ENCODE measurements at regions of chr7 and their contacts with region 1.

Region 1: DNA sequence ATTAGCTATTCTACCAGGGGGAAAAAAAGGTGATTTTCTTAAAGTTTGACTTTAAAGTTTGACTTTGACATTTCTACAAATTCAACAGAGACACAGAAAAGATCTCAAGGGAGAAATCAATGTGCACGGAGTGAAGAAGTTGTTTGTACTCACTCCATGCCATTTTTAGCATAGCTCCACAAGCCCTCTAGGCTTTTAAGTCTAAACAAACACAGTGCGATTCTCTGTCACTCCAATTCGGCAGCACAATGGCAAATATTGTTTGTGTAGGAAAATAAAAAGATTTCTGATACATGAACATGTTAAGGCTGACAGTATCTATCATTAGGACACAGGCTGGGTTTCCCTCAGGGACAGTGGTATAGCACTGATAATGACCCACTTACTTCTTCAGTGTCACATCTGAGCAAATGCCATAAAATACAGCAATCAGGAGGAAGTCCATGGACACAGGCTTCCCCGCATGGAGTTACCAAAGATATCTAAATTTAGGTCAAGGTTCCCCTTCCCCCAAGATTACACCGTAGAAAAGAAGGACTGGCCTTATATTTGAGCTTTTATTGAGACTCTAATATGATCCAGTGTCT is 28.0 kb downstream of the GSAP start:
- DNase-seq: peak; percentile 64
- ATAC-seq: peak; percentile 89
- H3K4me3 ChIP-seq: no peak overlapping the region
- H3K27ac ChIP-seq: peak overlapping the region; percentile 64
- H3K4me1 ChIP-seq: peaks cover 49% of the 10 kb centered on the region
- H3K27me3 ChIP-seq: no peaks in the 10 kb centered on the region
- CTCF ChIP-seq: no peak
- EP300 ChIP-seq: no peak
- POLR2A ChIP-seq: no peak
- RAD21 ChIP-seq: no peak

Region 2: GRCh38 chr7:77281780-77282478 is 106.2 kb before region 1 on chr7:
- CTCF ChIA-PET with region 1: no interaction called
- POLR2A ChIA-PET with region 1: no interaction called
- in situ Hi-C with region 1: no loop called
- intact Hi-C with region 1: no loop called
- DNase-seq: no peak
- ATAC-seq: no peak
- H3K4me3 ChIP-seq: no peak overlapping the region
- H3K27ac ChIP-seq: no peak overlapping the region
- H3K4me1 ChIP-seq: no peaks in the 10 kb centered on the region
- H3K27me3 ChIP-seq: no peaks in the 10 kb centered on the region
- CTCF ChIP-seq: no peak
- EP300 ChIP-seq: no peak
- POLR2A ChIP-seq: no peak
- RAD21 ChIP-seq: no peak

Region 3: GRCh38 chr7:77415823-77416622 is 27.9 kb after region 1 on chr7 and contains the start of gene GSAP:
- CTCF ChIA-PET with region 1: no interaction called
- POLR2A ChIA-PET with region 1: interaction called, 10 read pairs
- in situ Hi-C with region 1: no loop called
- intact Hi-C with region 1: no loop called
- DNase-seq: no peak
- ATAC-seq: peak; percentile 88
- H3K4me3 ChIP-seq: peak within 1 kb of the TSS; percentile 68 to 86 (median 81)
- H3K27ac ChIP-seq: peak within 1 kb of the TSS; percentile 94
- H3K4me1 ChIP-seq: peaks cover 71% of the 10 kb centered on the region
- H3K27me3 ChIP-seq: no peaks in the 10 kb centered on the region
- CTCF ChIP-seq: no peak
- EP300 ChIP-seq: 0 out of 4 replicates have a peak, but pooled peaks of 1 of the 2 experiments have one; percentile 5
- POLR2A ChIP-seq: peak; percentile 78 to 82
- RAD21 ChIP-seq: no peak; the same call in 1 of the 2 replicates
- total RNA-seq, gene GSAP: 15.6 and 34.6 TPM in 2 replicates

Region 4: DNA sequence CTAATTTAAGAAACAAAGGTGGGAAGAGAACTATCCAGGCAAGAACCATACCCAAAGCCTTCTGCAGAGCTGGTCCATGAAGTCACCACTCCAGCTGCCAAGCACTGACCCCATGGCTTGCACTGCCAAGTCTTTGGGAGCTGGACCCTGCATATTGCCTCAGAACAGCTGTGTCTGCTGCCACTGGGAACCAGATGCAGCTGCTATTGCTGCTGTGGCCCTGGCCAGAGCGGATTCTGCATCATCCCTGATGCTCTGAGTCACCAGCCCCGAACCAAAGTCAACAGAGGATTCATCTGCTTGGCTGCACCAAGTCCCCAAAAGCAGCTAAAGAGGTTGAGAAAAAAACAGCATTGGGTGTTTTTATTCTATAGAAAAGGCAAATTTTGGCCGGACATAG is 67.2 kb after region 1 on chr7:
- CTCF ChIA-PET with region 1: no interaction called
- POLR2A ChIA-PET with region 1: no interaction called
- in situ Hi-C with region 1: no loop called
- intact Hi-C with region 1: no loop called
- DNase-seq: peak; percentile 60
- ATAC-seq: peak; percentile 55
- H3K4me3 ChIP-seq: no peak overlapping the region
- H3K27ac ChIP-seq: no peak overlapping the region
- H3K4me1 ChIP-seq: peaks cover 71% of the 10 kb centered on the region
- H3K27me3 ChIP-seq: no peaks in the 10 kb centered on the region
- CTCF ChIP-seq: no peak
- EP300 ChIP-seq: no peak
- POLR2A ChIP-seq: no peak
- RAD21 ChIP-seq: no peak

Region 5: DNA sequence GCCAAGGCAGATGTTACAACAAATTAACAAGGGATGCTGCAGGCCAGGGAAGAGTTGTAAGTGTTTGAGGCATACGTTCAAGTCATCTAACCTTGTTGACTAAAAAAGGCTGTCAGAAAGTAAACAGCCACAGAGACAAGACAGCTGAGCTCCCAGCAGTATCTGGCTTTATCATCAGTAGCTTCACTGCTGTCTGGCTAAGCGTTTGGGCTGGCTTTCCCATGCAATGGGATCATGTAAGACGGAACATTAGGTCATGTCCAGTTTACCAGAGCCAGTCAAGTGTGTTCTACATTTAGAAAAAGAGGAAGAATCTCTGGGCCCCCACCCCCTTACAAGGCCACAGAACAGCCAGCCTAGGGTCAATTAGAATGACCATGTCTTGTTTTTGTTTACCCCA is 79.3 kb after region 1 on chr7:
- CTCF ChIA-PET with region 1: no interaction called
- POLR2A ChIA-PET with region 1: no interaction called
- in situ Hi-C with region 1: no loop called
- intact Hi-C with region 1: no loop called
- DNase-seq: no peak
- ATAC-seq: no peak
- H3K4me3 ChIP-seq: no peak overlapping the region
- H3K27ac ChIP-seq: no peak overlapping the region
- H3K4me1 ChIP-seq: peaks cover 11% of the 10 kb centered on the region
- H3K27me3 ChIP-seq: no peaks in the 10 kb centered on the region
- CTCF ChIP-seq: no peak
- EP300 ChIP-seq: no peak
- POLR2A ChIP-seq: no peak
- RAD21 ChIP-seq: no peak

Region 6: GRCh38 chr7:77531038-77531437 is 142.9 kb after region 1 on chr7:
- CTCF ChIA-PET with region 1: no interaction called
- POLR2A ChIA-PET with region 1: no interaction called
- in situ Hi-C with region 1: no loop called
- intact Hi-C with region 1: no loop called
- DNase-seq: no peak
- ATAC-seq: no peak
- H3K4me3 ChIP-seq: no peak overlapping the region
- H3K27ac ChIP-seq: no peak overlapping the region
- H3K4me1 ChIP-seq: peaks cover 18% of the 10 kb centered on the region
- H3K27me3 ChIP-seq: no peaks in the 10 kb centered on the region
- CTCF ChIP-seq: no peak
- EP300 ChIP-seq: no peak
- POLR2A ChIP-seq: no peak
- RAD21 ChIP-seq: no peak